ENCODE measurements at regions of chr20 and their contacts with region 1.

Region 1: DNA sequence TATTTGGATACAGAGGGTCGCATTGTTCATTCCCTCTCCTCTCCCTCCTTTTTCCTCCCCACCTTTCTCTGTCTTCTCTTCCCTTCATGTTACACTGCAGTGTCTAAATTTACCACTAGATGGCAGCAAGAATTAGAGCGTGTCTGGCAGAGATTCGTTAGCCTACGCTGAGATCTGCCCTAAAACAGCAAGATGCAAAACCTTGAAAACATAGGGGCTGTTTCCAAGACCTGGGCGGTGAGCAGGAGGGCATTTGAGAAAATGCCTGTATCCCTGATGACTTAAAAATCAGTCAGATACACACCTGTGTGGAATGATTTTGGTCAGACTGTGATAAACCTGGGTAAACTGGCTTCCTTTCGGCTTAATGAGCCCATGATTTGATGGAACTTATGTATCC is 101.5 kb upstream of the ISM1 start:
- DNase-seq: peak; percentile 48
- ATAC-seq: peak; percentile 74
- H3K4me3 Mint-ChIP-seq: no peak overlapping the region
- H3K27ac Mint-ChIP-seq: no peak overlapping the region
- H3K4me1 Mint-ChIP-seq: no peaks in the 10 kb centered on the region
- H3K27me3 Mint-ChIP-seq: peaks cover 6% of the 10 kb centered on the region

Region 2: DNA sequence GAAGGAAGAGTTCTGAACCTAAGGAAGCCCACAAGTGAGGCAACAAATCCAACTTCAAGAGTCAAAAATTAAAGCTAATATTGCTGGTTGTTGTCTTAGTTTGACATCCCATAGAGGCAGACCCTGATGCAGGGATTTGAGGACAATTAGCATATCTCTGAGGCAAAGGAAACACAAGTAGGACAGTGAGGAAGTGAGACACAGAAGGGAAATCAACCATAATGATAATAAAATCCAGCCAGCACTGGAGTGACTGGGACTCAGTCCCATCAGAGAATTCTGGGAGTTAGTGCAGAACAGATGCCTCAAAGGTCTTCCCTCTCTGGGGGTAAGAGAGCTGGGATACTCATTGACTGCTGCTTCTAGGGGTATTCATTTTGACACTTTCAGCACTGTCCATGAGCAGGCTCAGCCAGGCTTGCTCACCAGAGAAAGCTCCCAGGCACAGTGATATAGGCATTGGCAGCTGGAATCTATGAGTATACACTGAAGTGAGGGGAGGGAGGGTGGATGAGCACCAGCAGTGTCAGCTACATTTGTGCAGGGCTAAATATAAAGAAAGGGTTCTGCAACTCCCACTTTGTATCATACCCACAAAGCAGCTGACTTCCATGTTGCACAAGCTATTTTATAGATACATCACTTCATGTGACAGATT is 154.2 kb before region 1 on chr20:
- CTCF ChIA-PET with region 1: no interaction called
- DNase-seq: no peak
- ATAC-seq: no peak
- H3K4me3 Mint-ChIP-seq: no peak overlapping the region
- H3K27ac Mint-ChIP-seq: no peak overlapping the region
- H3K4me1 Mint-ChIP-seq: no peaks in the 10 kb centered on the region
- H3K27me3 Mint-ChIP-seq: peaks cover 3% of the 10 kb centered on the region

Region 3: GRCh38 chr20:13148402-13148801 is 28.8 kb after region 1 on chr20:
- CTCF ChIA-PET with region 1: no interaction called
- DNase-seq: no peak
- ATAC-seq: no peak
- H3K4me3 Mint-ChIP-seq: no peak overlapping the region
- H3K27ac Mint-ChIP-seq: no peak overlapping the region
- H3K4me1 Mint-ChIP-seq: no peaks in the 10 kb centered on the region
- H3K27me3 Mint-ChIP-seq: peaks cover 26% of the 10 kb centered on the region

Region 4: DNA sequence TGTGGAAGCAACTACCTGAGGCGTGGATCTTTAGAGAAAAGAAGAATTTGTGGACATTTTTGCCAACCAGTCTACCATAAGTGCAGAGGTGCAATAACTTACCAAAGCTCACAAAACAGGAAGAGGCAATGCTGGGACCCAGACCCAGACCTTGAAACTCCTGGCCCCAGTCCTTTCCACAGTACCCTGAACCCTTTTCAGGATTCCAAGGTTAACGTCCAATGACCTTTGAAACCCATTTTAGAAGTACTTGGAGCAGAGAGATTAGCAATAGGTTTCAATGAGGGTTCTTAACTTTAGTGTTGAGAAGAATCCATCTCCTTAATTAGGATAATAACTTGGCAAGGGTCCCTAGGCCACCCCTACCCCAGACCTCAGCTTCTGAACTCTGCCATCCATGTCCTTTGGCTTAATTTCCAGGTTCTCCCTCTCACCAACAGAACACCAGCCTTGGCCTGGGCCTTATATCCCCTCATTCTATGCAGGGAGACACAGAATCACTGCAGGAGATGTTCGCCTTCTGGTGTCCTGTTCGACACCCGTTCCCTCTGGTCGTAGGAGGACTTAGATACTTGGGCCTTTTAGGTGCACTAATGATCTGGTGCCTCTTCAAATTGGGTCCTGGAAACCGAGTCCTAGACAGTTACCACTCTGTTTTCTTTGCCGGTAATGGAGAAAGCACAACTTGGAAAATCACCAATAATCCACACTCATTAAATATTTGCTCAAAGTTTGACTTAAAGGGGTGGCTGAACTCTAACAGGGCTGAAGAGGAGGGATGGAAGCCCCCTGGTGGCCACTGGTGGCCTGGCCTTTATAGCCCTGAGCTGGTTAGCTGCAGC is 142.1 kb after region 1 on chr20:
- CTCF ChIA-PET with region 1: interaction called, 22 read pairs
- DNase-seq: peak; percentile 62
- ATAC-seq: peak; percentile 89
- H3K4me3 Mint-ChIP-seq: no peak overlapping the region
- H3K27ac Mint-ChIP-seq: no peak overlapping the region
- H3K4me1 Mint-ChIP-seq: no peaks in the 10 kb centered on the region
- H3K27me3 Mint-ChIP-seq: peaks cover 4% of the 10 kb centered on the region

Region 5: DNA sequence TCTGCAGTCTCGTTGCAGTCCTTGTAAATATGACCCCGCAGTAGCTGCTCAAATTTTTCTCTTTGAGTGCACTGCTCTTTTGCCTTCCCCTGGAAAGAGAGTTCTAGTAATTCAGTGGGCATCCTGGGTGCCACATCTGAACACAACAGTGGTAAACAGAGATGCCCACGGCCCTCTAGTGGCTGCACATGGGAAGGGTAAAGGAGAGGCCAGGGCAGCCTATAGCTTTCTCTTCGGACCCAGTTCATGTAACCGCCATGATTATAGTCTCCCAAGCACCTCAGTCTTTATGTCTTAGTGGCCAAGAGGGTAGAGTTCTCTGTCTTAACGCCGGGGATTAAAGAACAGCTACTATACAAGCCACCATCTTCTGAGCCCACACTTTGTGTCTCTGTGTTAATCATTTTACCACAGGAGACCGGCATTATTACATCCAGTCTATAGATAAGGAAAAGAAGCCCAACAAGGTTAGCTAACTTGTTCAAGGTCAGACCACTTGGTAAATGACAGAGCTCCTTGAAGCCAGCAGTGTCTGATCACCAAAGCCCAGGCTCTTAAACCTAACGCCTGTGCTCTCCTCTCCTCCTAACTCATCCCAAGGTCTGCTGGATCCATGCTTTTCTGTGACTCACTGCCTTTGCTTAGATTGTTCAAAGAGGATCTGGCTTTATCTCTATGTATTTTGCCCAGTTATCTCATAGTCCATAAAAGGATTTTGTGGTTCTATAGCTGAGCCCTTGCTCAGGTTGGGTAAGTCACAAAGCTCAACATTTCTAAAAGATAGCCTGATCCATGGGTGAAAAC is 183.3 kb after region 1 on chr20:
- CTCF ChIA-PET with region 1: interaction called, 30 read pairs
- DNase-seq: peak; percentile 51
- ATAC-seq: peak; percentile 69
- H3K4me3 Mint-ChIP-seq: no peak overlapping the region
- H3K27ac Mint-ChIP-seq: no peak overlapping the region
- H3K4me1 Mint-ChIP-seq: no peaks in the 10 kb centered on the region
- H3K27me3 Mint-ChIP-seq: no peaks in the 10 kb centered on the region

Region 6: GRCh38 chr20:13449868-13450434 is 330.4 kb after region 1 on chr20:
- CTCF ChIA-PET with region 1: no interaction called
- DNase-seq: no peak
- ATAC-seq: no peak
- H3K4me3 Mint-ChIP-seq: no peak overlapping the region
- H3K27ac Mint-ChIP-seq: no peak overlapping the region
- H3K4me1 Mint-ChIP-seq: no peaks in the 10 kb centered on the region
- H3K27me3 Mint-ChIP-seq: no peaks in the 10 kb centered on the region

Region 7: DNA sequence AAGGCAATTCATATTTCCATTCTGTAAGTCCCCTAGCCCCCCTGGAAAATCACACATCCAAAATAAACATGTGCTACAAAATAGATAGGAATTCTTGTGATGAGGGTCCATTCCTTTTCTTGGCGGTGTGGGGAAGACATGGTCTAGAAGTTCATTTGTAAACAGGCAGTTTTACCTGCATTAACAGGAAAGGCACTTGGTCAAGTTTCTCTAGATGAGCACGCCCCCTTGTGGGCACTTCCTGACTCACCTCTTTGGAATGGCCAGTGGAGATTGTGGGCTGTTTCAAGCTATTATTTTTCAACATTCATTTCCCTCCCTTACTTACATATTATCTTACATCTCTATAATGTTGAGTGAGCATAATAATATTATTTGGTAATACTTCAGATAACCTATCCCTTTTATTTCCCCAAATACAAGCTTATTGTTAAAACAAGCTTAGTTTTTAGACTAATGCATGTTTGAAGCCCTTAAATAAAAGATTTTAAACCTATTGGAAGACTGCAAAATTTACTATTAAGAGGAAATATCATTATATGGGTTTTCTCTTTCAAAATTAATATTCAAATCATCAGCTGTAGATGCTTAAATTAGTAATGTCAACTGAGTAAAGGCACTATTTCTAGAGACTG is 427.0 kb after region 1 on chr20:
- CTCF ChIA-PET with region 1: interaction called, 27 read pairs
- DNase-seq: peak; percentile 75
- ATAC-seq: no peak
- H3K4me3 Mint-ChIP-seq: no peak overlapping the region
- H3K27ac Mint-ChIP-seq: no peak overlapping the region
- H3K4me1 Mint-ChIP-seq: no peaks in the 10 kb centered on the region
- H3K27me3 Mint-ChIP-seq: no peaks in the 10 kb centered on the region